ENCODE measurements at regions of chr18 and their contacts with region 1.

Region 1: DNA sequence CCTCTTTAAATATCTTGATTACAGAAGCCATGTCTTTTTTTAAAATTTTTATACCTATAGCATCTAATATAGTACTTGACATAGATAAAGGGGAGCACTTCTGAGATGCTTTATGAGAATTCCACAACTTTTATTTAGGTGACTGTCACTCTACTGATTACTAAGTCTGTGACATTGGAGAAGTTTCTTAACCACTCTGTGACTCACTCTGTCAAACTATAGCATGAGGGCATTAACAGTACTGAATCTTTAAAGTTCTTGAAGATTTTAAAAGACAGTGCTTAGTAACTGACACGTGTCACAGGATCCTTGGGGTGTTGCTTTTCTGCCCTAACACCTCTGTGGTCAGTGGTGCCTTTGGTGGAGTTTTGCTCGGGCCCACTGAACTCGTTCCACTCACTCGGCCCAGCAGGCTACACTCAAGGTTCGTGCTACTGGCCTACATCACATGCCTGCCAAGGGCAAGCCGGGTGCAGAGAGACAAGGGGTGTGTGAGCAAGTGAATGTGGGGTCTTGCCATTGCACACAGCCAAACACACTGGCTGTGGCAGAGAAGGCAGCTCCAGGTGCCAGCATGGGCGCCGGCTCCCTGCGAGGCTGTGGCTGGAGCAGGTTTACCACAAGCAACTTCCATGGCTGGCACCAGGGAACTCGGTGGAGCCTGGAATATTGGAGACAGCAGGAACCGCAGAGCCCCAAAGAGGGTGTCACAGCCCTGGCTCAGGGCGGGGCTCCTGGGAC is 734.0 kb upstream of the CDH7 start:
- DNase-seq: no peak
- ATAC-seq: peak; percentile 20

Region 2: DNA sequence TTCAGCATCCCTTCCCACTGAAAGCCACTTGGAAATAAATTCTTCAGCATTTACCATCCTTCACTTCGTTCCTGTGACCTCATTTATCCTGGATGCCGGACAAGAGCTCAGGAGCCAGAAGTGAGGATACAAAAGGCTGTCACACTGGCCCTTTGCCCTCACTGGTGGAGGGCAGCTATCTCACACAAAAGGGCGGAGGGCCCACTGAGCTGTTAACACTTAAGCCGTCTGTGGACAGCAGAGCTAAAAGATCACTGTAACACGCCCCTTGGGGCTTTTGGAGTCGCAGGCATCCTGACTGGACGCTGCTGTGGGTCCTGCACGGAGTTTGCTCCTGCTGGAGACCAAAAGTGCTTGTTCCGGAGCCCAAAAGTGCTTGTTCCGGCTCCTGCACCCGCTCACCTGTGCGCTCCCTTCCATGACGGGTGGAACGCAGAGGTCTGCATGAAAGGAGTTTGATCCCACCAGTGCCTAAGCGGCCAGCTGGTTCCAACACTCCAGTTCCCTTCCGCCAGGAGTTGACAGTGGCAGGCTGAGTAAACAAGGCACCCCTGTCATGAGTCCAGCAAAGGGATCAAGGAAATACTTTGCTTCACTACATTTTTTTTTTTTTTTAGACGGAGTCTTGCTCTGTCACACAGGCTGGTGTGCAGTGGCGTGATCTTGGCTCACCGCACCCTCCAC is 295.9 kb before region 1 on chr18:
- intact Hi-C with region 1: no loop called
- DNase-seq: no peak
- ATAC-seq: no peak

Region 3: DNA sequence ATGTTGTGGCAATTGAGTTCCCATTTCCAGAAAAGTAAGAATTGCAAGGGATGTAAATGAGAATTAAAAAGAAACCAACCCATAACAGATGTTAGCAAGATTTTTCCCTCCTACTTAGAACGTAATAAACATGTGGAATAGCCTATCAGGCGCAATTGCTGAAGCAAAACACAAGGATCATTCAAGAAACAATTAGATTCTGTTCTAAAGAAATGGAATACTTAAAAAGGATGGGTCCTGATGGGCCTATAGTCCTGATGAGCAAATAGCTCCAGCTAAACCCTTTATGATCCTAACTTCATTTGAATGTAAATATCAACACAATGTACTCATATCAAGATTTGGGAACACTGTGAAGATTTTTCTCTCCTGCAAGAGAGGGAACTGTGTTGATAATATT is 37.0 kb before region 1 on chr18:
- intact Hi-C with region 1: loop called (anchors 2 kb)
- DNase-seq: no peak
- ATAC-seq: no peak

Measured in sciatic nerve (tissue), 2 donors.